BJ (cell line): ENCODE measurements at regions of chr5 and their contacts with region 1.

Region 1: GRCh38 chr5:138352071-138352721 is at the start of gene KDM3B:
- DNase-seq: no peak
- H3K4me3 ChIP-seq: peak within 1 kb of the TSS; percentile 87
- H3K27me3 ChIP-seq: no peaks in the 10 kb centered on the region
- CTCF ChIP-seq: peak; percentile 98
- polyA plus RNA-seq, gene KDM3B: 20.4 and 21.2 TPM in 2 replicates

Region 2: DNA sequence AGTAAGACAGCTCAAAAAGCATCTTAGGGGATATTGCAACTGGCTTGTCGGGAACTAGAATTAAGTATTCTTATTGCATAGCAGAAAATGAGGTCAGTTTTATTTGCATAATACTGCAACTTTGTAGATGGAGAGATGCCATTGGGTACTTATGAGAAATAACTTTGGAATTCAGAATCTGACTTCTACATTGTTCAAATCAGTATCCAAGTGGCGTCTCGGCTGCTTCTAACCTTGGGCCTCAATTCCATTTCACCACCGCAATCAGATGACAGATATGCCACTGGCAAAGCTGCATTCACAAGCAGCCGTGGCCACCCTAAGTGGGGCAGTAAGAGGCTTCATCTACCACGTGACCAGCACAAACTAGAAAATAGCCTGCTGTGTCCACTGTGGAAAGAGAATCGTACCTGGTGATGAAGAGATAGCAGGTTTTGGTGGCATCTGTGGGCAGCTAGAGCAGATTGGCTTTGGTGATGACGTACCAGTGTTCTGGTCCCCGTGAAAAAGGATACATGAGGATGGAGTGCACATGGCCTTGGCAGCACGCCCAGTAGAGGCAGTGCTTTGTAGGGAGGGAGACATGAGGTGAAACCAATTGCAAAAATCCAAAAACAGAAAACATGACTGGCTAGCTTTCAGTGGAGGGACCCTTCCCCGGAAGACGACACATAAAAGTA is 732.9 kb before region 1 on chr5:
- CTCF ChIA-PET with region 1: no interaction called
- POLR2A ChIA-PET with region 1: interaction called, 12 read pairs
- DNase-seq: peak; percentile 78
- H3K4me3 ChIP-seq: no peak overlapping the region
- H3K27me3 ChIP-seq: no peaks in the 10 kb centered on the region
- CTCF ChIP-seq: no peak

Region 3: DNA sequence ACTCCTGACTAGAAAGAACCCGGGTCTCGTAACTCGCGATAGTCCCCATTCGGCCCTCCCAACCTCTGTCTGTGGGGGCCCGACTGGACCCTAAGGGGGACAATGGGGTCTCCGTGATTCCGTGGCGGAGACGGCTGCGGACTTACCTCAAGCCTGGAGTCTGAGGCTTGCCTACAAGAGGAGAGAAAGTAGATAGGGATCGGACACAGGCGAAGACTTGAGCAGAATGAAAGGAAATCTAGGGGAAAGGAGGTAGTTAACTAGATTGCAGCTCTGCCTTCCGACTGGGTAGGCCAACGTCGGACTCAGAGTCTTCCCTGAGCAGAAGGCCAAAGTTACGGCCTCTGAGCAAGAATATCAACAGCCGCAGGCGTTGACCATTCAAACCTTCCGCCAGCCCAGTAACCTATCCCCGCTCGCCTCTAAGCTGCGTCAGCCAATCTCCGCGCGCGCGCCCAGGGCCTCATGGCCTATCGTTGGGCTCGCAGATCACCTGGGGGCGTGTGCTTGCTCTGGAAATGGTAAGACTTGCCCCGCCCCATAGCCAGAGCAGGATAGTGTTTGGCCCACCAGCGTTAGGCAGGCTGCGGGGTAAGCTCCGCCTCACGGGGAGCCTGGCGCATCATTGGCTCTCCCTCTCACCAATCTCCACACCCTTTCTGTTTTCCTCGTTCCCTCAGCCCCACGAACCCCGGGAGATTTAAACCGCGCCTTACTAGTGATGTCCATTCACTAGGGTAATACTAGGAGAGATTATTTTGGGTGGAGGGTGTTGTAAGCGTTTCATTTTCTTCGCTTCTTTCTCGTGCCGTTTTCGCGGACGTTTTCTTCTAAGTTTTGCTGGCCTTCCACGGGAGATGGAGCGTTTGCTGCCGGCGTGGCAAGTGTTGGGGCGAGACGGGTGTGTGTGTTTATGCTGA is 20.5 kb before region 1 on chr5 and contains the start of gene CDC25C:
- CTCF ChIA-PET with region 1: interaction called, 118 read pairs
- POLR2A ChIA-PET with region 1: interaction called, 3 read pairs
- DNase-seq: peak; percentile 99
- H3K4me3 ChIP-seq: peak within 1 kb of the TSS; percentile 51
- H3K27me3 ChIP-seq: no peaks in the 10 kb centered on the region
- CTCF ChIP-seq: no peak
- polyA plus RNA-seq, gene CDC25C: 7.8 and 8.7 TPM in 2 replicates

Region 4: GRCh38 chr5:138337685-138338410 is 14.3 kb before region 1 on chr5 and contains the start of gene FAM53C:
- CTCF ChIA-PET with region 1: interaction called, 118 read pairs
- POLR2A ChIA-PET with region 1: interaction called, 3 read pairs
- DNase-seq: peak; percentile 59
- H3K4me3 ChIP-seq: peak within 1 kb of the TSS; percentile 77
- H3K27me3 ChIP-seq: no peaks in the 10 kb centered on the region
- CTCF ChIP-seq: no peak
- polyA plus RNA-seq, gene FAM53C: 30.1 and 31.3 TPM in 2 replicates

Region 5: GRCh38 chr5:138369706-138370105 is 17.5 kb after region 1 on chr5:
- CTCF ChIA-PET with region 1: interaction called, 93 read pairs
- POLR2A ChIA-PET with region 1: no interaction called
- DNase-seq: no peak
- H3K4me3 ChIP-seq: no peak overlapping the region
- H3K27me3 ChIP-seq: no peaks in the 10 kb centered on the region
- CTCF ChIP-seq: no peak

Region 6: GRCh38 chr5:138438724-138439476 is 86.7 kb after region 1 on chr5 and contains the start of gene REEP2:
- CTCF ChIA-PET with region 1: no interaction called
- POLR2A ChIA-PET with region 1: no interaction called
- DNase-seq: no peak
- H3K4me3 ChIP-seq: peak within 1 kb of the TSS; percentile 57
- H3K27me3 ChIP-seq: no peaks in the 10 kb centered on the region
- CTCF ChIP-seq: no peak
- polyA plus RNA-seq, gene REEP2: 12.0 and 14.0 TPM in 2 replicates

Region 7: DNA sequence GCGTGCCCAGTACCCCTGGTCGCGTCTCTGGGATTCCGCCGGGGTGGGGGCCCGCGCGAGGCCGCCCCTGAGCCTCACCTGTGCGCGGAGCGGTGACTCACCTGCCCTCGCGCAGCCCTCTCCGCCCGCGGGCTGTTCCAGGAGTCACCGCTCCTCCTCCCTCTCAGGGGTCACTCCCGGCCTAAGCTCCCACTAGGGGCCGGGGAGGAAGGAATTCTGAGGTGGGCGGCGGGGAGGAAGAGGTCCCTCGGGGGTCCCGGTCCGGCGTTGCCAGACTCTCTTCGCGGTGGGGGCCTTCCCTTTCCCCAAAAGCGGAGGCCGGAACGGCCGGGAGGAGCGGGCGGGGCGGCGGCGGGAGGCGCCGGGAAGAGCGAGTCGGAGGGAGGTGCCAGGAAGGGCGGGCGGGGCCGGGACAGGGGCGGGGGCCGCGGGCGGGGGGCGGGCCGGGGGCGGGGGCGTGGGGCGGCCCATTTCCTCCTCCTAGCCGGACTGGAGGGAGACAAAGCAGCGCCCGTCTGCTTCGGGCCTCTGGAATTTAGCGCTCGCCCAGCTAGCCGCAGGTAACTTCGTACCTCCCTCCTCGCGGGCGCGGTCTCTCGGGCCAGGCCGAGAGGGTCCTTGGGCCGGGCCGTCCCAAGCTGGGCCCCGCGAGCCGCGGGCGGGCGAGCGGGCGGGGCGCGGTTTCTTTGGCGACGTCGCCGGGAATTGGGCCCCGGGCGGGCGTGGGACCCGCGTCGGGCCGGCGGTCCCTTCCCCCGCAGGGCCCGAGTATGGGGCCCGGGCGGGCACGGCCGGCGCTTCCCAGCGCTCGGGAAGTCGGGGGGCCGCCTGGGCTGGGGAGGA is 401.0 kb after region 1 on chr5 and contains the start of gene CTNNA1:
- CTCF ChIA-PET with region 1: no interaction called
- POLR2A ChIA-PET with region 1: no interaction called
- DNase-seq: no peak
- H3K4me3 ChIP-seq: peak within 1 kb of the TSS; percentile 61
- H3K27me3 ChIP-seq: no peaks in the 10 kb centered on the region
- CTCF ChIP-seq: no peak
- polyA plus RNA-seq, gene CTNNA1: 122 and 169 TPM in 2 replicates